PC-3 (cell line): ENCODE measurements at regions of chr12 and their contacts with region 1.

Region 1: DNA sequence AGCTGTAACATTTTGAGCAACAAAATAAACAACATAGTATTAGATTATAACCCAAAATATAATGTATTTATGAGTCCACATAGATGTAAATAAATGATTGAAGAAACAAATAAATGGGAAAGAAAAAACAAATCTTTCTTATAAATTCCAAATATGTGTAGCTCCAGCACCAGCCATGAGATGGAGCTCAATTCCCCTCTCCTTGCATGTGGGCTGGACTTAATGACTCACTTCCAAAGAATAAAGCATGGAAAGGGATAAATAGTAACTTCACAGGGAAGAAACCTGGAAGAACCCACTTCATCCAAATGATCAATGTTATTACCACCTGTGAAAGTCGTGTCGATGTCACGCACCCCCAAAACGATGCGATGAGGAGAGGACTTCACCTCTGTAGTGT is 158.7 kb downstream of the RPAP3 start:
- DNase-seq: peak; percentile 70
- ATAC-seq: peak; percentile 73
- H3K4me3 ChIP-seq: no peak overlapping the region
- H3K27ac ChIP-seq: no peak overlapping the region
- H3K4me1 ChIP-seq: peaks cover 8% of the 10 kb centered on the region; the same call in 1 of the 2 replicates
- H3K27me3 ChIP-seq: peaks cover 18% of the 10 kb centered on the region
- CTCF ChIP-seq: peak; percentile 77

Region 2: GRCh38 chr12:47651368-47652254 is 104.5 kb after region 1 on chr12:
- CTCF ChIA-PET with region 1: interaction called, 5 read pairs
- POLR2A ChIA-PET with region 1: no interaction called
- intact Hi-C with region 1: loop called (anchors 1 kb)
- DNase-seq: peak; percentile 82
- ATAC-seq: peak; percentile 79
- H3K4me3 ChIP-seq: peak overlapping the region; percentile 61
- H3K27ac ChIP-seq: no peak overlapping the region
- H3K4me1 ChIP-seq: peaks cover 15% of the 10 kb centered on the region
- H3K27me3 ChIP-seq: no peaks in the 10 kb centered on the region
- CTCF ChIP-seq: peak; percentile 71

Region 3: DNA sequence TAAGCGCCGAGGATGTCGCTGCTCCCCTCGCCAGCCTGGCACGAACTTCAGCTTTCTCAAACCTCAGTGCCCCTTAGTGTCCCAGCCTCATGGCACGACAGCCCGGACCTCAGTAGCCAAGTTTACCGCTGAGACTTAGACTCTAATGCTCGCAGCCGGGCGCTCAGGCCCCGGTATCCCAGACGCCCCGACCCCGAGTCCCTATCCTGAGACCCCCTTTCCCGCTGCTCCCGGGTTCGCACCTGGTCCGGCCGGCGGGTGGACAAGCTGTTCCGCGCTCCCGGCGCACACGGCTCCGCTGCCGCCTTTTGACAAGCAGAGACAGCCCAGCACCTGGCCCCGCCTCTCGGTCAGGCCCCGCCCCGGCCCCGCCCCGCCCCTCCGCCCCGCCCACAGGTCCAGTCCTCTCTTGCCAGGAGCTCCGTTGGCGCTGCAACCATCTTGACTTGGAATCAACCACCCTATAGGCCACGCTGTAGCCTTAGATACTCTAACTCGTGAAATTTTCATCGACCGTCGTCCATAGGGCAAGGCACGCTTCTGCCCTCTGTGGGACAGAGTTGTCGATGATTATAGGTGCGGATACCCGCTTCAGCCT is 357.7 kb after region 1 on chr12 and contains the start of gene VDR:
- CTCF ChIA-PET with region 1: no interaction called
- POLR2A ChIA-PET with region 1: no interaction called
- intact Hi-C with region 1: no loop called
- DNase-seq: peak; percentile 75
- ATAC-seq: peak; percentile 62
- H3K4me3 ChIP-seq: peak within 1 kb of the TSS; percentile 86
- H3K27ac ChIP-seq: peak within 1 kb of the TSS; percentile 72
- H3K4me1 ChIP-seq: peaks cover 41% of the 10 kb centered on the region
- H3K27me3 ChIP-seq: no peaks in the 10 kb centered on the region
- CTCF ChIP-seq: no peak
- total RNA-seq, gene VDR: 19.6 and 19.9 TPM in 2 replicates